OCI-LY7 (cell line): ENCODE measurements at regions of chr15 and their contacts with region 1.

Region 1: DNA sequence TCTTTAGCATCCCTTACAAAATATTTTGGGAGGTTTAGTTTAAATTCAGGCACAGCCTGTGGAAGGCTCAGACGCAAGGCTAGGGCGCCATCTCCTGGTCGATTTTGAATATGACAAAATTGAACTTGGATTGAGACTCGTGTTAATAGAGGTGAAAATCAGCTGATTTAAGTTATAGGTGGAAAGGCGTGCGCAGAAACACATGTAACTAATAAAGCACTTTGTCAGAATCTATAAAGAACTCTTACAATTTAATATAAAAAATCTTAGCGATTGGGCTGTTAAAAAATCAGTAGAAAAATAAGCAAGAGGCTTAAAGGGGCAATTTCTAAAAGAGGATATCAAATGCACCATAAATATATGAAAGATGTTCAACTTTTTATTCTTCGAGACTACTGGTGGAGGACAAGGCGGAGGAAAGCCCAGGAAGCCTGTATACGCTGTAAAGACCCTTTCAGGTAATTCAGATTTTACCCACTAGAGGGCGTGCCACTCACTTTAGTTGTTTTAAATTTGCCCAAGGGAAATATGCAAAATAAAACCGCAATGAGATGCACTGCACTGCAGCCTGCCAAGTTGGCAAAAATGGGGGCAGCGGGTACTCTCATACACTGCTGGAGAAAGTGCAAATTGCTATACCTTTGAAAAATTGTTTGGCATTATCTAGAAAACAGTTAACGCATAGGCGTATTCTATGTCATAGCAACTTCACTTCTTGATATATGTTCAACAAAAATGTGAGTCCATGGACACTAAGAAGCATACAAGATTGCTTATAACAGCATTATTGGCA is 64.7 kb downstream of the SLC30A4 start:
- DNase-seq: peak; percentile 94
- H3K4me3 ChIP-seq: peak overlapping the region; percentile 67
- H3K27ac ChIP-seq: peak overlapping the region; percentile 63
- H3K4me1 ChIP-seq: peaks cover 29% of the 10 kb centered on the region
- CTCF ChIP-seq: peak; percentile 95

Region 2: GRCh38 chr15:45126535-45127158 is 331.2 kb before region 1 on chr15:
- CTCF ChIA-PET with region 1: no interaction called
- POLR2A ChIA-PET with region 1: no interaction called
- intact Hi-C with region 1: loop called (anchors 5 kb)
- DNase-seq: peak; percentile 49
- H3K4me3 ChIP-seq: no peak overlapping the region
- H3K27ac ChIP-seq: no peak overlapping the region
- H3K4me1 ChIP-seq: no peaks in the 10 kb centered on the region
- CTCF ChIP-seq: peak; percentile 95

Region 3: DNA sequence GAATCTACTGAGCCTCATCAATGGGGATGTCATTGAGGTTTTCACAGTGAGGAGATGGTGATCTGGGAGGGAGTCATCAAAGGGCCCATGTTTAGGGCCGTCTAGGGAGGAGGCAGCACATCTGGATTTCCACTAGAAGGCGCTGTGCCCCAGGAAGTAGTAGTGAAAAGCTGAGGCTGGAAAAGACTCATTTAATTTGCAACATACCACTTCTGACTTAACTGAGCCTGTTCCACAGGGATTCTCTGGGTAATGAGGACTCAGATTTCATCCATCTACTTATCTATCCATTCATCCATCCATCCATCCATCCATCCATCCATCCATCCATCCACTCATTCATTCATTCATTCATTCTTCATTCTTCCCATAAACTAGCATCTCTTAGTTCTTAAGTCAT is 252.6 kb before region 1 on chr15:
- CTCF ChIA-PET with region 1: no interaction called
- POLR2A ChIA-PET with region 1: no interaction called
- intact Hi-C with region 1: loop called (anchors 2 kb)
- DNase-seq: peak; percentile 79
- H3K4me3 ChIP-seq: no peak overlapping the region
- H3K27ac ChIP-seq: no peak overlapping the region
- H3K4me1 ChIP-seq: peaks cover 9% of the 10 kb centered on the region
- CTCF ChIP-seq: peak; percentile 94

Region 4: GRCh38 chr15:45429974-45430792 is 27.7 kb before region 1 on chr15:
- CTCF ChIA-PET with region 1: no interaction called
- POLR2A ChIA-PET with region 1: interaction called, 3 read pairs
- intact Hi-C with region 1: loop called (anchors 1 kb)
- DNase-seq: peak; percentile 53
- H3K4me3 ChIP-seq: no peak overlapping the region
- H3K27ac ChIP-seq: no peak overlapping the region
- H3K4me1 ChIP-seq: no peaks in the 10 kb centered on the region
- CTCF ChIP-seq: peak; percentile 98

Region 5: DNA sequence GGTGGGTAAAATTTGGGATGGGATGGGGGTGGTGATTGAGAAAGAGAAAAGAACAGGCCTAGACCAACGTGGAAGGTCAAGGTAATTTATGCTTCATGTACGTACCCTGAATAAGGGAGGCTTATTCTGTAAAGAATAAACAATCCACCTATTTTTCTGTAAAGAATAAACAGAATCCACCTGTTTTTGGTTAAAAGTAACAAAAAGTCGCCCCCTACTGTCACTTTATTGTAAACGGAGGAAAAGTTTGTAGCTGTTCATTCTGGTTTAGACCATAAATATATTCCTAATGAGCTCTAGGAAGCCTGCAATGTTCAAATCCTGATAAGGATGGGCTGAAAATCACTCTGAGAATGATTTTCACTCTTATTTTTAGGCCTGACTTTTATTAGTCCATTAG is 153.5 kb after region 1 on chr15:
- CTCF ChIA-PET with region 1: interaction called, 6 read pairs
- POLR2A ChIA-PET with region 1: interaction called, 5 read pairs
- intact Hi-C with region 1: loop called (anchors 1 kb)
- DNase-seq: peak; percentile 59
- H3K4me3 ChIP-seq: no peak overlapping the region
- H3K27ac ChIP-seq: no peak overlapping the region
- H3K4me1 ChIP-seq: peaks cover 17% of the 10 kb centered on the region
- CTCF ChIP-seq: peak; percentile 86

Region 6: GRCh38 chr15:45634442-45635190 is 176.8 kb after region 1 on chr15 and contains the start of gene SQOR:
- CTCF ChIA-PET with region 1: no interaction called
- POLR2A ChIA-PET with region 1: no interaction called
- intact Hi-C with region 1: no loop called
- DNase-seq: no peak
- H3K4me3 ChIP-seq: peak within 1 kb of the TSS; percentile 62
- H3K27ac ChIP-seq: no peak within 1 kb of the TSS
- H3K4me1 ChIP-seq: peaks cover 15% of the 10 kb centered on the region
- CTCF ChIP-seq: no peak
- total RNA-seq, gene SQOR: 0.23 and 1.8 TPM in 2 replicates